CD4-positive, alpha-beta T cell (primary cell): ENCODE measurements at regions of chr19 and their contacts with region 1.

Region 1: DNA sequence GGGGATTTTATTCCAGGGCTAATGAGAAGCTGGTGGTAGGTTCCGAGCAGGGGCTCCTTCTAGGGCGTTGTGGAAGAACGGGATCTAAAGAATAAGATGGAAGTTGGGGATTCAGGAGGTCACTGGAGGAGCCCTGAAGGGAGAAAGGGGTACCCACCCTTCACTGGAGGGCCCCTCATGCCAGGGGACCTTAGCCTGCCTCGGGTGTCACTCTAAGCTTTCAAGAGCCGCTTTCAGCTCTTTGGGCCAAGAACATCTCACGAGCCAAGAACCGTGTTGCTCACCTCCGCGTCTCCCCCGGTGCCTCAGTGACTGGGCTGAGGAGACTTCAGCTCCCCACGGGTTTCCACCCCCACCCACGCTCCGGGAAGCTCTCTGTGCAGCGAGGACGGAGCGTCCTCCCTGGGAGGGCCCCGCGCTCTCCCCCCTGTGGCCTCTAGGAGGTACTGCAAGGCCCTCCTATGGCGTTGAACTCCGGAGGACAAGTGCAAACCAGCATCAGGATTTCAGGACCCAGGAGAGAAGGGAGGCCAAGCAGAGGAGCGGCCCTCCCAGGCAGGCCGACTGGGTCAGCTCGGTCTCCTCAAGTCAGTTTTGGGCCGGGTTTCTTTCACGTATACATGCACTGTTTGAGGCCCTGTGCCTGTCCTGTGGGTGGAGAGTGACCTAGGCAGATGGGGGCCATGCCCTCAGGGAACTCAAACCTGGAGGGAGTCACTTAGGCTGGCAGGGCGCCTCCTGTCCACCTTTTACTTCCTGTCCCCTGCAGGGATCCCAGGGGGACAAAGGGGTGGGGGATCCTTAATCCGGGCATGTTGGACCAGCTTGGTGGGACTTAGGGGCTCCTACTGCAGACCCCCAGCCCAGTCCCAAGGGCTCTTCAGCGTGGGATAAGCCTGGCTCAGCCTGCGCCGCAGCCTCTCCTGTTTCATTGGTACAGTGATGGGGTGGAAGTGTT is 5.1 kb upstream of the KRTDAP start:
- DNase-seq: peak; percentile 46 to 82 (median 58)
- ATAC-seq: peak; percentile 100
- H3K4me3 ChIP-seq: no peak overlapping the region
- H3K4me3 Mint-ChIP-seq: no peak overlapping the region
- H3K27ac ChIP-seq: no peak overlapping the region
- H3K27ac Mint-ChIP-seq: no peak overlapping the region
- H3K4me1 ChIP-seq: peaks cover 10% of the 10 kb centered on the region
- H3K4me1 Mint-ChIP-seq: peaks cover 8% of the 10 kb centered on the region
- H3K27me3 ChIP-seq: peaks cover 0 to 2% of the 10 kb centered on the region in 2 experiments
- H3K27me3 Mint-ChIP-seq: peaks cover 15% of the 10 kb centered on the region
- CTCF ChIP-seq: peak; percentile 91

Region 2: DNA sequence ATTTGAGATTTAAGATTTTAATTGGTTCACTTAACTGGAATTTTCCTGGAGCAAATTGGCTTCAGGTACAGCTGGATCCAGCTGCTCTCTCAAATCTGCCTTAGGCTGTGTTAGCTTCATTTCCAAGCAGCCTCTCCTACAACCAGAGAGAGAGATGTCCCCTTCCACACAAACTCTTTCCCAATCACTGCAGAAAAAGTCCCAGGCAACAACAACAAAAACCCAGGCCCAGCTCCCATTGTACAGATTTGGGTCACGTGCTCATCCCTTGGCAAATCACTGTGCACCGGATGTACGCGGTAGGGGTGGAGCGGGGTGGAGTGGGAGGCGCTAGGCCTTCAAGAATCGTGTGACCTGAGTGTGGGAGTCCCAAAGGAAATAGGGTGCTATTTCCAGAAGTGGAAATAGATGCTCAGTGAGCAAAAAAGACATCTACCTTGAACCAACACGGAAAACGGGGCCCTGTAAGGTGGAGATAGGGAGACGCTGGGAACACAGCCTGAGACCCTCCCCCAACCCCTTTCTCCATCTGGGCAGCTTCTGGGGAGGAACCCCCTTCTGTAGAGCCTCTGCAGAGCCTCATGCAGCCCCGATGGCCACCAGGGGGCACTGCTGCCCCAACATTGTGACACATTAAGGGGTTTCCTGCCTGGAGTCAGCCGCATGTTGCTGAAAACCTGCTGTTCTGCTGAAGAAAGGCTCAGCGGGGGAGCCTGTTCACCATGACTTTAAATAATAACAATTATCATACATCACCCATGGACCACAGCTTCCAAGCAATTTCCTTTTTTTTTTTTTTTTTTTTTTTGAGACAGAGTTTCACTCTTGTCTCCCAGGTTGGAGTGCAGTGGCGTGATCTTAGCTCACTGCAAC is 428.5 kb before region 1 on chr19:
- CTCF ChIA-PET with region 1: interaction called, 4 read pairs
- POLR2A ChIA-PET with region 1: no interaction called
- intact Hi-C with region 1: loop called (anchors 2 kb)
- DNase-seq: peak; percentile 83 to 94 (median 88)
- ATAC-seq: peak; percentile 95
- H3K4me3 ChIP-seq: no peak overlapping the region
- H3K4me3 Mint-ChIP-seq: no peak overlapping the region
- H3K27ac ChIP-seq: no peak overlapping the region
- H3K27ac Mint-ChIP-seq: no peak overlapping the region
- H3K4me1 ChIP-seq: peaks cover 8% of the 10 kb centered on the region
- H3K4me1 Mint-ChIP-seq: peaks cover 8% of the 10 kb centered on the region
- H3K27me3 ChIP-seq: peaks cover 0 to 5% of the 10 kb centered on the region in 2 experiments
- H3K27me3 Mint-ChIP-seq: no peaks in the 10 kb centered on the region
- CTCF ChIP-seq: peak; percentile 87

Region 3: DNA sequence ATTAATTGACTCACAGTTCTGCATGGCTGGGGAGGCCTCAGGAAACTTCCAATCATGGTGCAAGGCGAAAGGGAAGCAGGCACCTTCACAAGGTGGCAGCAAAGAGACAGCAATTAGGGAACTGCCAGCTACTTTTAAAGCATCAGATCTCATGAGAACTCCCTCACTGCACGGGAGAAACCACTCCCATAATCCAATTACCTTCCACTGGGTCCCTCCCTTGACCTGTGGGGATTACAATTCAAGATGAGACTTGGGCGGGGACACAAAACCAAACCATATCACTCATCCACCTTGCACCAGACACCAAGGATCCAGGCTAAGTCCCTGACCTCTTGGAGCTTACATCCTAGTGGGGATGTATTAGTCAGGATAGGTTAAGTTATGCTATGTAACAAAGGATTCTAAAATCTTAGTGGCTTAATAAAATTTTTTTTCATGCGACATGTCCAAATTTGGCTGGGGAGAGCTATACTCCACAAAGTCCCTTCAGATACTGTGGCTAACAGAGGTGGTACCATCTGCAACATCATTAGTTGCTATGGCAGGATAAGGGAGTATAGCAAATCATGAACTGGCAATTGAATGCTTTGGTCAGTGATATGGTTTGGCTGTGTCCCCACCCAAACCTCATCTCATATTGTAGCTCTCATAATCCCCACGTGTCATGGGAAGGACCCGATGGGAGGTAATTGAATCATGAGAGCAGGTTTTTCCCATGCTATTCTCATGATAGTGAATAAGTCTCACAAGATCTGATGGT is 258.6 kb before region 1 on chr19:
- CTCF ChIA-PET with region 1: interaction called, 5 read pairs
- POLR2A ChIA-PET with region 1: no interaction called
- intact Hi-C with region 1: loop called in 1 of 2 experiments (anchors 2 kb)
- DNase-seq: peak in 9 of 14 experiments; percentile 23 to 66 (median 48)
- ATAC-seq: no peak
- H3K4me3 ChIP-seq: no peak overlapping the region
- H3K4me3 Mint-ChIP-seq: no peak overlapping the region
- H3K27ac ChIP-seq: no peak overlapping the region
- H3K27ac Mint-ChIP-seq: no peak overlapping the region
- H3K4me1 ChIP-seq: peaks cover 17% of the 10 kb centered on the region
- H3K4me1 Mint-ChIP-seq: peaks cover 33% of the 10 kb centered on the region
- H3K27me3 ChIP-seq: no peaks in the 10 kb centered on the region
- H3K27me3 Mint-ChIP-seq: no peaks in the 10 kb centered on the region
- CTCF ChIP-seq: peak; percentile 48

Region 4: GRCh38 chr19:35269421-35270117 is 225.8 kb before region 1 on chr19:
- CTCF ChIA-PET with region 1: interaction called, 3 read pairs
- POLR2A ChIA-PET with region 1: no interaction called
- intact Hi-C with region 1: loop called in 1 of 2 experiments (anchors 5 kb)
- DNase-seq: peak; percentile 63 to 90 (median 74)
- ATAC-seq: peak; percentile 46
- H3K4me3 ChIP-seq: peak overlapping the region; percentile 32
- H3K4me3 Mint-ChIP-seq: peak overlapping the region; percentile 83
- H3K27ac ChIP-seq: peak overlapping the region in 1 of 2 donors; percentile 65
- H3K27ac Mint-ChIP-seq: peak overlapping the region; percentile 81
- H3K4me1 ChIP-seq: peaks cover 54% of the 10 kb centered on the region
- H3K4me1 Mint-ChIP-seq: peaks cover 41% of the 10 kb centered on the region
- H3K27me3 ChIP-seq: no peaks in the 10 kb centered on the region
- H3K27me3 Mint-ChIP-seq: no peaks in the 10 kb centered on the region
- CTCF ChIP-seq: peak; percentile 77

Region 5: DNA sequence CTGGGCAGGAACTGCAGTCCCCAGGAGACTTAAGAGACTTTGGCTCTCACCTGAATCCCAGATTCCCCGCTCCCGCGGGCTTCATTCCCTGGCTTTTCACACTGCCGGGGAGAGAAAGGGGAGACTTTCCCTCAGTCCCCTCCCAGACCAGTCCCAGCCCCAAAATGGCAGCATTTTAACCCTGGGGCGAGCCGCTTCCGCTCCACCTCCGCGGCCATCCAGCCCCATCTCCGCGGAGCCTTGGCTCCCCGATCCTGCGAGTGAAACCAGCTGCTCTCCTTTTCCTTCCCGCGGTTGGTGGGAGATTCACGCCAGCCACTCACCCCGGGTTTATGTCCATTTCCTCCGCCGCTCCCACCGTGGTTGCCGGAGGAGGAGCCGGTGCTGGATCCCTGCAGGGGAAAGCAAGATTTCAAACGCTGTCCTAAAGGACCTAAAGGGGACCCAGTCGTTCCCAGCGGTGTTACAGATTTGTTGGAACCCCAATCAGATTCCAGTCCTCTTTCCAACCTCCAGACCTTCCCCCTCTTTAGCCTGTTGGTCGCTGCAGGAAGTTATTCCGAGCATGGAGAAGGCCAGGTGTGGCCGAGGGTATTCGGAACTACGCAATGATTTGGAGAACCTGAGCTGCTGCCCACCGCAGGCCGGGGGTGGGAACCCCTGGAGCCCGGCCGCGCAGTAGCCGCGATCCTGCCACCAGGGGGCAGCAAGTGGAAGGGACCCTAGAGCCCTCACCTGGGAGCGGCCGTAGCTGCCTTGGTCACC is 14.7 kb after region 1 on chr19:
- CTCF ChIA-PET with region 1: interaction called, 12 read pairs
- POLR2A ChIA-PET with region 1: interaction called, 4 read pairs
- intact Hi-C with region 1: no loop called
- DNase-seq: peak; percentile 53 to 82 (median 64)
- ATAC-seq: peak; percentile 74
- H3K4me3 ChIP-seq: peak overlapping the region; percentile 52
- H3K4me3 Mint-ChIP-seq: peak overlapping the region; percentile 72
- H3K27ac ChIP-seq: no peak overlapping the region
- H3K27ac Mint-ChIP-seq: no peak overlapping the region
- H3K4me1 ChIP-seq: peaks cover 20% of the 10 kb centered on the region
- H3K4me1 Mint-ChIP-seq: peaks cover 17% of the 10 kb centered on the region
- H3K27me3 ChIP-seq: peaks cover 26 to 31% of the 10 kb centered on the region in 2 experiments
- H3K27me3 Mint-ChIP-seq: peaks cover 81% of the 10 kb centered on the region
- CTCF ChIP-seq: peak; percentile 86